Activated naive CD4-positive, alpha-beta T cell treated with anti-CD3 and anti-CD28 coated beads for 36 hours (primary cell): ENCODE measurements at regions of chr10 and their contacts with region 1.

Region 1: GRCh38 chr10:28291881-28292297 is 11.0 kb downstream of the MPP7 start:
- DNase-seq: peak; percentile 84
- H3K4me3 Mint-ChIP-seq: no peak overlapping the region
- H3K27ac Mint-ChIP-seq: peak overlapping the region; percentile 89
- H3K4me1 Mint-ChIP-seq: peaks cover 73% of the 10 kb centered on the region
- H3K27me3 Mint-ChIP-seq: no peaks in the 10 kb centered on the region

Region 2: GRCh38 chr10:28151636-28152035 is 140.3 kb before region 1 on chr10:
- CTCF ChIA-PET with region 1: no interaction called
- intact Hi-C with region 1: no loop called
- DNase-seq: no peak
- H3K4me3 Mint-ChIP-seq: no peak overlapping the region
- H3K27ac Mint-ChIP-seq: no peak overlapping the region
- H3K4me1 Mint-ChIP-seq: no peaks in the 10 kb centered on the region
- H3K27me3 Mint-ChIP-seq: no peaks in the 10 kb centered on the region

Region 3: GRCh38 chr10:28190196-28190595 is 101.7 kb before region 1 on chr10:
- CTCF ChIA-PET with region 1: no interaction called
- intact Hi-C with region 1: no loop called
- DNase-seq: no peak
- H3K4me3 Mint-ChIP-seq: no peak overlapping the region
- H3K27ac Mint-ChIP-seq: no peak overlapping the region
- H3K4me1 Mint-ChIP-seq: peaks cover 53% of the 10 kb centered on the region
- H3K27me3 Mint-ChIP-seq: no peaks in the 10 kb centered on the region

Region 4: DNA sequence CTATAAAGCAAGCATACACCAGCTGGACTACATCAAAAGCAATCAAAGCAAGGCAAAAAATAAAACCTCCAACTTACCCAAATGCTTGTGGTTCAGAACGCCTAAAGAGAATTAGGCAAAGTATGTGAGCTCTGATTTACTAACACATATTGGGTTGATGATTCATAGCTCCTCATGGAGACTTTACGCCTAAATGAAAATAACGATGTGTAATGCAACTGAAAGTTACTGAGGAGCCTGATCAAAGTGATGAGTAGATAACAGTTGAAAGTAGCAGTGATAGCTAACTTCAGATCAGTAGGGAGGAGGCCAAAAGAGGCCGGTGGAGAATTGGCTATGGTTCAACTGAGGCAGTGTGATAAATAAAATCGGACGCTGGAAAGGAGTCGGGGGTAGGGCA is 74.0 kb before region 1 on chr10:
- CTCF ChIA-PET with region 1: no interaction called
- intact Hi-C with region 1: loop called (anchors 1 kb)
- DNase-seq: peak; percentile 45
- H3K4me3 Mint-ChIP-seq: no peak overlapping the region
- H3K27ac Mint-ChIP-seq: no peak overlapping the region
- H3K4me1 Mint-ChIP-seq: peaks cover 48% of the 10 kb centered on the region
- H3K27me3 Mint-ChIP-seq: no peaks in the 10 kb centered on the region

Region 5: DNA sequence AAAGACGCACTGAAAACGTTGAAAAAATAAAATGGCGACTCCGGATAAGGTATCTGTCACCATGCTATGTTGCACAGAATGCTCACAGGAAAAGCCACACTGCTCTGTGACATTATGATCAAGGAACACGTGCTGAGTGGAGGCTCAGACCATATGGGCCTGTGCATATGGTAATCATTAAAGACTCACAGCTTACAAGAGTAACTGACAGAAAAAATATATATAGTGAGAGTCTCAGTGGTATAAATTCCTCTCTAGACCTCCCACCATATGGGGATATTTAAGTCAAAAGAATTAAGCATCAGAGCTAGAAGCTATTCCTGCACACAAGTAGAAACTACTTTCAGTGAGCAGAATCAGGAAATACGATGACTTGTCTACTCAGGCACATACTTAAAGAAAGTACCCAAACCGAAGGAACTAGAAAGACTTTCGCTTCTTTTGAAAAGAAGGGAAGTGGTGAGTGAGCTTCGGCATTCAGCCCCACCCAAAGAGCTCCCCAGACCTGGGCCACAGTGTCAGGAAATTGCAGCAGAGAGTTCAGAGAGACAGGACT is 76.1 kb after region 1 on chr10:
- CTCF ChIA-PET with region 1: no interaction called
- intact Hi-C with region 1: loop called (anchors 1 kb)
- DNase-seq: peak; percentile 78
- H3K4me3 Mint-ChIP-seq: peak overlapping the region; percentile 49
- H3K27ac Mint-ChIP-seq: peak overlapping the region; percentile 91
- H3K4me1 Mint-ChIP-seq: peaks cover 44% of the 10 kb centered on the region
- H3K27me3 Mint-ChIP-seq: no peaks in the 10 kb centered on the region